Heart right ventricle (tissue), 16 donors: ENCODE measurements at regions of chr3 and their contacts with region 1.

Region 1: GRCh38 chr3:195716865-195717210 is 3.9 kb upstream of the MUC20 start:
- DNase-seq: no peak
- ATAC-seq: peak in 5 of 8 donors; percentile 8 to 29 (median 12)
- H3K4me3 ChIP-seq: no peak overlapping the region
- H3K27ac ChIP-seq: no peak overlapping the region
- H3K4me1 ChIP-seq: no peaks in the 10 kb centered on the region
- H3K27me3 ChIP-seq: no peaks in the 10 kb centered on the region
- CTCF ChIP-seq: no peak

Region 2: GRCh38 chr3:195612075-195612800 is 104.6 kb before region 1 on chr3:
- intact Hi-C with region 1: loop called in 3 of 10 experiments (anchors 5 to 10 kb)
- DNase-seq: no peak
- ATAC-seq: peak in 4 of 8 donors; percentile 24 to 55 (median 42)
- H3K4me3 ChIP-seq: no peak overlapping the region
- H3K27ac ChIP-seq: peak overlapping the region in 2 of 10 donors; percentile 13 to 31
- H3K4me1 ChIP-seq: peaks cover 0 to 18% (median 5%) of the 10 kb centered on the region in 9 donors
- H3K27me3 ChIP-seq: no peaks in the 10 kb centered on the region
- CTCF ChIP-seq: no peak

Region 3: DNA sequence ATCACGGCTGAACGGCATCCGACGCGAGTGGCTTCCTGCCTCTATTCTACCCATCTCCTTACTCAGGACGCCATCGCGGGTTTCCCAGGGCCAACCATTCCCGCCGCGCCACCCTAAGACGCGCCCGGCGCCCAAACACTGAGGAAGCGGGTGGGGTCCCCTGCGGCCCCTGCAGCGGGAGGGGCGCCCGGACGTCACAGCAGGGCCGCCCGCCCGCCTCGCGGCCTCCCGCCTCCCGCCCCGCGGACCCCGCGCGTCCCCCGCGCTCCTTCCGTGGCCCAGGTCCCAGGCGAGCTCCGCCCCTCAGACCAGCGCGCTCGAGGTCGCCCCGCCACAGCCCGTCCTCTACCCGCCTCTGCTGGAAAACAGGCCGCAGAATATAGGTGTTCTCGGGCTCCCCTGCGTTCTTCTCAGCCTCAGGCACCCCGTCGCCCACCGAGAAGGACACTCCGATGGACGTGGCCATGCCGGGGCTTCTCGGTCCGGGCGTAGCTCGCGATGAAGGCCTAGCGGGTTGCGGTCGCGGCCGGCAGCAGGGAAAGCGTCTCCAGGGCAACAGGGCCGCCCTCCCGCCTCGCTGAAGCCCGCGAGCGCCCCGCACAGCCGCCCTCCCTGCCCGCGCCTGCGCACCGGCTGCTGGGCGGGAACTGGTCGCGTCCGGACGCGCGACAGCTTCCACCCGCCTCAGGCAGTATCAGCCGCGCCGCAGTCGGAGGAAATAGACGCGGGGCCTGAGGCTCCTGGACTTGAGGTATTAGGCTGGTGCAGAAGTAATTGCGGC is 601.0 kb after region 1 on chr3 and contains the start of gene DYNLT2B:
- intact Hi-C with region 1: no loop called
- DNase-seq: peak; percentile 86 to 90
- ATAC-seq: peak; percentile 98 to 99 (median 99)
- H3K4me3 ChIP-seq: peak within 1 kb of the TSS; percentile 67 to 97 (median 88)
- H3K27ac ChIP-seq: peak within 1 kb of the TSS; percentile 76 to 97 (median 93)
- H3K4me1 ChIP-seq: peaks cover 0 to 16% (median 0%) of the 10 kb centered on the region in 9 donors
- H3K27me3 ChIP-seq: no peaks in the 10 kb centered on the region
- CTCF ChIP-seq: peak in 4 of 9 donors; percentile 13 to 31 (median 22)
- total RNA-seq, gene DYNLT2B: 2.1 to 6.3 (median 3.9) TPM